Prostate gland (tissue), 2 donors: ENCODE measurements at regions of chr13 and their contacts with region 1.

Region 1: GRCh38 chr13:102596147-102597028 is at the start of gene TPP2:
- DNase-seq: peak; percentile 98
- H3K4me3 ChIP-seq: peak within 1 kb of the TSS; percentile 97 to 99
- H3K27ac ChIP-seq: peak within 1 kb of the TSS; percentile 95 to 96
- H3K4me1 ChIP-seq: no peaks in the 10 kb centered on the region
- H3K27me3 ChIP-seq: no peaks in the 10 kb centered on the region
- CTCF ChIP-seq: peak in 2 of 4 experiments; percentile 3 to 8
- POLR2A ChIP-seq: peak; percentile 85
- total RNA-seq, gene TPP2: 31.4 to 31.8 TPM

Region 2: DNA sequence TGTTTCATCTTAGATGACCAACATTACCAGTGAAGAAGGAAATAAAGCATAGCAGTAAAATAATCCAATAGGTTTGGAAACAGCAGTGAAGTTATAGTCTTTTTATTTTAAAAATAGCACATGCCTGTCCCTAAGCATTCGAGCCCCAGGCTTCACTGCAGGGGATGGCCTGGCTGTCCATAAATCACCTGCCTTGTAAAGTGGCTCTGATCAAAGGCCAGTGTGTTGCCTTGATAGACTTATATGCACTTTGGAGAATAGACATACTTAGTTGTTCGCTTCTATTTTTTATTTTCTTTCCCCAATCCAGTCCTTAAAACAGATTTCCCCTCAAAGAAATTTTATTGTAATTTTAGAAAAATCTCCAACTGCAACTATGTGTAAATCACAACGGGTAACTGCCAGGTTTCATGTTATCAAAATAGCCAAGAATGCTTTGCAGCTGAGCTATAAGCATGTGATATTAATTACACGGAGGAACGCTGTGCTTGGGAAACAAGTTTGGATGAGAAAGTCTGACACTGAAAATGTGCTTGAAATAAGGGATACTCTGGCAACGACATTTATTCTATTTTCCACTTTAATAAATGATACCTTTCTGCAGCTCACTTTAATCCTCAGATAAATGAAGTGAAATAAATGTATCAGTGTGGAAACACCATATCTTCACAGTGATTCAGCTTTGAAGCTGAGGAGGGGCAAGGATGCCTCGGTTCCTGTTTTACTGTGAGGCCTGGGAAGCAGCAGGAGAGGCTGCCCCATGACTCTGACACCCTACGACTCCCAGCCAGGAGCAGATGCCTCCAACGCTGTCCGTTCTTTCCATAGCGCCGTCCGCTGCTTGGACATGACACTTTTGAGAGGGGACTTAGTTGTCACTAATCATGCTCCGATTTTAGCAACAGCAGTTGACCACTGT is 104.0 kb after region 1 on chr13:
- intact Hi-C with region 1: loop called (anchors 5 kb)
- DNase-seq: no peak
- H3K4me3 ChIP-seq: no peak overlapping the region
- H3K27ac ChIP-seq: no peak overlapping the region
- H3K4me1 ChIP-seq: no peaks in the 10 kb centered on the region
- H3K27me3 ChIP-seq: no peaks in the 10 kb centered on the region
- CTCF ChIP-seq: no peak
- POLR2A ChIP-seq: no peak

Region 3: DNA sequence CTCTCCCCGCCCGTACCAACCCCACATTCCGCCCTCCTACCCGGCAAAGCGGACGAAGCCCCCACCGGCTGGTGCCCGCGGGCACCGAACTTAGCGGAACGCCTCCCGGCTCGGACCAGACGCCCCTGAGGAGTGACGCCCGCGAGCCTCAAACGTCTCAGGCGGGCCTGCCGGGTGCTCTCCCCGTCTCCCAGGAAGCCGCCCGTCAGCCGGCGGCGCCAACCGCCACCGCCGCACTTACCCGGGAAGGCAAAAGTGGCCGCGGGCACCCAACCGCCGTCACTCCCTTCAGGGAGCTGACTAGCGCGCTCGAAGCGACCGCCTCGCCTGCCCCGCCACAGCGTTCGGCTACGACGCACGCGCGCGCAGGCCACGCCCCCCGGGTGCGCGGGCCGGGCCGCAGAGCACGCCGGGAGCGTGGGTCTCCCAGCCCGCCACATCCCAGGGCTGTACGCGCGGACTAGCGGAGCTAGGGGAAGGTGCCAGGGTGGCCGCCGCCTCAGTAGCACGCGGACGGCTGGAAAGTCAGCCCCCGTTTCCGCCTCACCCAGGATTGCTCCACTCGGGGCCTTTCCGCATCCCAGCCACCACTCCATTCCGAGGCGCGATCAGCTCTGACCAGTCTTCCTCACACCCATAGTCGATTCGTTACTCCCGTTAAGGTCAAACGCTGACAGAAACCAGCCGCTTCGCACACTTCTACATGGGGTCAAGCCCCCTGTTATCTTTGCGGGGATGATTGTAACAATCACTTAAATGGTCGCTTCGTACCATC is 177.2 kb after region 1 on chr13 and contains the start of gene TEX30:
- intact Hi-C with region 1: loop called (anchors 5 kb)
- DNase-seq: peak; percentile 66
- H3K4me3 ChIP-seq: peak within 1 kb of the TSS; percentile 63 to 73
- H3K27ac ChIP-seq: peak within 1 kb of the TSS; percentile 70 to 74
- H3K4me1 ChIP-seq: no peaks in the 10 kb centered on the region
- H3K27me3 ChIP-seq: no peaks in the 10 kb centered on the region
- CTCF ChIP-seq: no peak
- POLR2A ChIP-seq: peak; percentile 63
- total RNA-seq, gene TEX30: 3.6 to 22.2 TPM